ENCODE measurements at regions of chr3 and their contacts with region 1.

Region 1: GRCh38 chr3:10322352-10322710 is 1.4 kb upstream of the SEC13 start:
- DNase-seq: peak in 3 of 9 donors; percentile 12 to 32 (median 17)
- ATAC-seq: no peak
- H3K4me3 ChIP-seq: no peak overlapping the region
- H3K4me3 Mint-ChIP-seq: peak overlapping the region in 5 of 10 donors; percentile 5 to 85 (median 32)
- H3K27ac ChIP-seq: no peak overlapping the region
- H3K27ac Mint-ChIP-seq: peak overlapping the region in 8 of 9 donors; percentile 0 to 97 (median 86)
- H3K4me1 ChIP-seq: peaks cover 12 to 22% of the 10 kb centered on the region in 2 donors
- H3K4me1 Mint-ChIP-seq: peaks cover 5 to 40% (median 30%) of the 10 kb centered on the region in 7 donors
- H3K27me3 ChIP-seq: no peaks in the 10 kb centered on the region
- H3K27me3 Mint-ChIP-seq: peaks cover 0 to 27% (median 9%) of the 10 kb centered on the region in 5 donors

Region 2: GRCh38 chr3:9352917-9353752 is 969.2 kb before region 1 on chr3:
- CTCF ChIA-PET with region 1: no interaction called
- POLR2A ChIA-PET with region 1: no interaction called
- intact Hi-C with region 1: loop called in 1 of 2 experiments (anchors 10 kb)
- DNase-seq: peak; percentile 21 to 57 (median 51)
- ATAC-seq: peak; percentile 85
- H3K4me3 ChIP-seq: no peak overlapping the region
- H3K4me3 Mint-ChIP-seq: no peak overlapping the region
- H3K27ac ChIP-seq: no peak overlapping the region
- H3K27ac Mint-ChIP-seq: peak overlapping the region in 2 of 9 donors; percentile 13 to 17
- H3K4me1 ChIP-seq: no peaks in the 10 kb centered on the region
- H3K4me1 Mint-ChIP-seq: peaks cover 4 to 13% (median 5%) of the 10 kb centered on the region in 7 donors
- H3K27me3 ChIP-seq: no peaks in the 10 kb centered on the region
- H3K27me3 Mint-ChIP-seq: peaks cover 0 to under 1% (median 0%) of the 10 kb centered on the region in 5 donors

Region 3: GRCh38 chr3:9749645-9750555 is 572.4 kb before region 1 on chr3 and contains the start of gene OGG1:
- CTCF ChIA-PET with region 1: no interaction called
- POLR2A ChIA-PET with region 1: interaction called, 4 read pairs
- intact Hi-C with region 1: loop called in 1 of 2 experiments (anchors 2 kb)
- DNase-seq: peak; percentile 77 to 95 (median 94)
- ATAC-seq: peak; percentile 97
- H3K4me3 ChIP-seq: peak within 1 kb of the TSS; percentile 84
- H3K4me3 Mint-ChIP-seq: peak within 1 kb of the TSS; percentile 93 to 98 (median 96)
- H3K27ac ChIP-seq: peak within 1 kb of the TSS; percentile 73
- H3K27ac Mint-ChIP-seq: peak within 1 kb of the TSS; percentile 86 to 96 (median 93)
- H3K4me1 ChIP-seq: peaks cover 13 to 22% of the 10 kb centered on the region in 2 donors
- H3K4me1 Mint-ChIP-seq: peaks cover 30 to 58% (median 47%) of the 10 kb centered on the region in 7 donors
- H3K27me3 ChIP-seq: no peaks in the 10 kb centered on the region
- H3K27me3 Mint-ChIP-seq: no peaks in the 10 kb centered on the region
- total RNA-seq, gene OGG1: 18.8 to 42.9 (median 31.6) TPM

Region 4: GRCh38 chr3:9986237-9986725 is 336.1 kb before region 1 on chr3:
- CTCF ChIA-PET with region 1: interaction called, 3 read pairs
- POLR2A ChIA-PET with region 1: no interaction called
- intact Hi-C with region 1: loop called (anchors 1 kb)
- DNase-seq: no peak
- ATAC-seq: peak; percentile 52
- H3K4me3 ChIP-seq: peak overlapping the region; percentile 100
- H3K4me3 Mint-ChIP-seq: peak overlapping the region; percentile 95 to 99 (median 98)
- H3K27ac ChIP-seq: peak overlapping the region; percentile 96
- H3K27ac Mint-ChIP-seq: peak overlapping the region; percentile 95 to 100 (median 98)
- H3K4me1 ChIP-seq: peaks cover 13 to 15% of the 10 kb centered on the region in 2 donors
- H3K4me1 Mint-ChIP-seq: peaks cover 0 to 48% (median 35%) of the 10 kb centered on the region in 7 donors
- H3K27me3 ChIP-seq: no peaks in the 10 kb centered on the region
- H3K27me3 Mint-ChIP-seq: no peaks in the 10 kb centered on the region

Region 5: DNA sequence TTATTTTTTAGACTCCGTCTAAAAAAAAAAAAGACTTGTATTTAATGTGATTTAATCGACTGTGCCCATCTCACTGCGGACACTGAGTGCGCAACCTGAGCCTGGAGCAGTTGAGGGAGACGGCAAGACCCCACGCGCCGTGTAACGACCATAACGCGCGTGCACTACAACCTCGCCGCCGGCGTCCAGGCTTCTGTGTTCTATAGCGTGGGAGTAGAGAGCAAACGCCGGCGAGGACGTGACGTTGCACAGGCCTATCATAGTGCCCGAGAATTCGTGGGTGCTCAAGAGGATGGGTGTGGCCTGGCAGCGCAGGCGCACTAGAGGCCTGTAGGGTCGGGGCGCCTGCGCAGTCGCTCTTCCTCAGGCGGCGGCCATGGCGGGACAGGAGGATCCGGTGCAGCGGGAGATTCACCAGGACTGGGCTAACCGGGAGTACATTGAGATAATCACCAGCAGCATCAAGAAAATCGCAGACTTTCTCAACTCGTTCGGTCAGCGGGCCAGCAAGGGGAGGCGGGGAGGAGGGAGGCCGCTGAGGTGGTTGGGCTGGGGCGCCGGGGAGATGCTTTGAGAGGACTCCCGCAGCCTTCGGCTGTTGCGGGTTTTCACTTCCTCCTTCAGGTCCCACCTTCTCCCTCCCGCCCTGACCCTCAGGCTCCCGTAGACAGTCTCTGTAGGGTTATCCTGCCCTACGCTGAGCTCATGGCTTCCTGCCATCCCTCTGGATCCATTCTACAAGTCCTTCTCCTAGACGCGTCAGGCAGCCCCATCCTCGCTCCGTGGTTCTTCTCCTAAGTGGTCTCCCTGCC is 206.8 kb before region 1 on chr3 and contains the start of gene BRK1:
- CTCF ChIA-PET with region 1: no interaction called
- POLR2A ChIA-PET with region 1: no interaction called
- intact Hi-C with region 1: loop called (anchors 1 kb)
- DNase-seq: peak; percentile 73 to 94 (median 91)
- ATAC-seq: peak; percentile 99
- H3K4me3 ChIP-seq: peak within 1 kb of the TSS; percentile 83
- H3K4me3 Mint-ChIP-seq: peak within 1 kb of the TSS; percentile 91 to 100 (median 98)
- H3K27ac ChIP-seq: peak within 1 kb of the TSS; percentile 85
- H3K27ac Mint-ChIP-seq: peak within 1 kb of the TSS; percentile 92 to 99 (median 98)
- H3K4me1 ChIP-seq: peaks cover 11 to 13% of the 10 kb centered on the region in 2 donors
- H3K4me1 Mint-ChIP-seq: peaks cover 23 to 48% (median 40%) of the 10 kb centered on the region in 7 donors
- H3K27me3 ChIP-seq: no peaks in the 10 kb centered on the region
- H3K27me3 Mint-ChIP-seq: peaks cover 0 to 2% (median 0%) of the 10 kb centered on the region in 5 donors
- total RNA-seq, gene BRK1: 40.9 to 117 (median 65.8) TPM

Region 6: DNA sequence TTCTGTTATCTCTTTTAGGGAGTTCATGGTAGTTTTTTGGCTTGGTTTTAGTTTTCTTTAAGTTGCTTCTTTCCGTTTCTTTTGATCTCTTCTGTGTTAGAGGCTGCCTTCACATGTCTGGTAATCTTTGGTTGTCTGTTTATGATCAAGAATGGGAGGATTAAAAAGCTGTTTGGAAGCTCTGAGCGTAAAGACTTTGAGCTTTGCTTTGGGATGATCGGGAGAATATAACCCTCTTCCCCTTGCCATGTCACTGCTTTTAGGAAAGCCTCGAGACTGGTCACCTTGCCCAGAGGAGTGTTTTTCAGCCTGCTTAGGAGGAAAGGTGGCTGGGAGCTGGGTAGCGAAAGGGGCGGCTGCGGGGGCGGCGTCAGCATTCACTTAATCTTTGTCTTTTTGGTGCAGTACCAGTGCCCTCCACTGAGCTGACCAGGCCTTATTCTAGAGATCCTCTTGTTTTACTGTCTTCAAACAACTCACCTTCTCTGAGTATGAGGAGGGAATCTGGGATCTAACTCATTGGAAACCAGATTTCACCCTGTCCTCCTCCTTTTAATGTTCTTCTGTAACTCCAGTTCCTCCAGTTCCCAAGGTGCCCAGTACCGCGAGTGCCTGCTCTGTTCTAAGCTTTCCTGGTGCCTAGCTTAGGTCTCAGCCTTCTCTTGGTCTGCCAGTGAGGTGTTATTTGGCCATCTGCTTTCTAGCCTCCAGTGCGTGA is 58.5 kb before region 1 on chr3:
- CTCF ChIA-PET with region 1: no interaction called
- POLR2A ChIA-PET with region 1: interaction called, 4 read pairs
- intact Hi-C with region 1: loop called in 1 of 2 experiments (anchors 5 kb)
- DNase-seq: peak; percentile 33 to 76 (median 71)
- ATAC-seq: peak; percentile 96
- H3K4me3 ChIP-seq: peak overlapping the region; percentile 47
- H3K4me3 Mint-ChIP-seq: peak overlapping the region; percentile 68 to 87 (median 77)
- H3K27ac ChIP-seq: peak overlapping the region; percentile 73
- H3K27ac Mint-ChIP-seq: peak overlapping the region; percentile 82 to 97 (median 91)
- H3K4me1 ChIP-seq: peaks cover 36 to 62% of the 10 kb centered on the region in 2 donors
- H3K4me1 Mint-ChIP-seq: peaks cover 50 to 97% (median 80%) of the 10 kb centered on the region in 7 donors
- H3K27me3 ChIP-seq: no peaks in the 10 kb centered on the region
- H3K27me3 Mint-ChIP-seq: no peaks in the 10 kb centered on the region

Region 7: GRCh38 chr3:10594921-10595320 is 272.6 kb after region 1 on chr3:
- CTCF ChIA-PET with region 1: no interaction called
- POLR2A ChIA-PET with region 1: no interaction called
- intact Hi-C with region 1: no loop called
- DNase-seq: peak in 8 of 9 donors; percentile 7 to 59 (median 38)
- ATAC-seq: peak; percentile 73
- H3K4me3 ChIP-seq: no peak overlapping the region
- H3K4me3 Mint-ChIP-seq: no peak overlapping the region
- H3K27ac ChIP-seq: no peak overlapping the region
- H3K27ac Mint-ChIP-seq: peak overlapping the region in 1 of 9 donors; percentile 4
- H3K4me1 ChIP-seq: no peaks in the 10 kb centered on the region
- H3K4me1 Mint-ChIP-seq: no peaks in the 10 kb centered on the region
- H3K27me3 ChIP-seq: no peaks in the 10 kb centered on the region
- H3K27me3 Mint-ChIP-seq: peaks cover 20 to 41% (median 39%) of the 10 kb centered on the region in 5 donors

Measured in naive thymus-derived CD4-positive, alpha-beta T cell (primary cell).